ENCODE measurements at regions of chr2 and their contacts with region 1.

Region 1: GRCh38 chr2:142603759-142604158 is 273.7 kb upstream of the KYNU start:
- DNase-seq: no peak
- H3K4me3 Mint-ChIP-seq: no peak overlapping the region
- H3K27ac Mint-ChIP-seq: no peak overlapping the region
- H3K4me1 Mint-ChIP-seq: no peaks in the 10 kb centered on the region
- H3K27me3 Mint-ChIP-seq: peaks cover 64% of the 10 kb centered on the region
- CTCF ChIP-seq: peak; percentile 37

Region 2: GRCh38 chr2:141554810-141555209 is 1048.9 kb before region 1 on chr2:
- CTCF ChIA-PET with region 1: no interaction called
- POLR2A ChIA-PET with region 1: no interaction called
- intact Hi-C with region 1: loop called (anchors 10 kb)
- DNase-seq: peak; percentile 50
- H3K4me3 Mint-ChIP-seq: no peak overlapping the region
- H3K27ac Mint-ChIP-seq: no peak overlapping the region
- H3K4me1 Mint-ChIP-seq: peaks cover 7% of the 10 kb centered on the region
- H3K27me3 Mint-ChIP-seq: peaks cover 13% of the 10 kb centered on the region
- CTCF ChIP-seq: peak; percentile 44

Region 3: GRCh38 chr2:142165790-142166189 is 438.0 kb before region 1 on chr2:
- CTCF ChIA-PET with region 1: interaction called, 4 read pairs
- POLR2A ChIA-PET with region 1: no interaction called
- intact Hi-C with region 1: loop called (anchors 2 kb)
- DNase-seq: peak; percentile 56
- H3K4me3 Mint-ChIP-seq: no peak overlapping the region
- H3K27ac Mint-ChIP-seq: no peak overlapping the region
- H3K4me1 Mint-ChIP-seq: peaks cover 5% of the 10 kb centered on the region
- H3K27me3 Mint-ChIP-seq: peaks cover 55% of the 10 kb centered on the region
- CTCF ChIP-seq: peak; percentile 30

Region 4: DNA sequence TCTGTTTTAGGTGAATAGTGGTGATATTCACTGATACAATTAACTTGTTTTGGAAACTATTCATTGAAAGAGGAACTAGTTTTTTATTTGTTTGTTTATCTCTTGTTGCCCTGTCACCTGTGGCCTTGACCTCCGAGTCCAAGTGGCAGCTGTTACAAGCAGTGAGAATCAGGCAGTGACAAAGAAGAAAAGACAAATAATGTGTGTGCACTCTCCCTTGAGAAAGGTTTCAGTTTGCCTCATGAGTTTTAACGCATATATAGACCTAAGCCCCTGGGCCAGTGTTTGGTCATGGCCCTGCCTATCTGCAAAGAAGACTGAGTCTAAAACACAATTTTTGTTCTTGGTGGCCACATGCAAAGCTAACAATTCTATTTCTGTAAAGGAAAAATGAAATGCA is 289.0 kb after region 1 on chr2:
- CTCF ChIA-PET with region 1: no interaction called
- POLR2A ChIA-PET with region 1: no interaction called
- intact Hi-C with region 1: no loop called
- DNase-seq: no peak
- H3K4me3 Mint-ChIP-seq: no peak overlapping the region
- H3K27ac Mint-ChIP-seq: peak overlapping the region; percentile 65
- H3K4me1 Mint-ChIP-seq: peaks cover 30% of the 10 kb centered on the region
- H3K27me3 Mint-ChIP-seq: no peaks in the 10 kb centered on the region
- CTCF ChIP-seq: no peak